ENCODE measurements at regions of chr9 and their contacts with region 1.

Region 1: GRCh38 chr9:135117281-135117680 is 29.8 kb downstream of the OLFM1 start:
- DNase-seq: no peak
- ATAC-seq: no peak

Region 2: GRCh38 chr9:135229701-135230385 is 112.6 kb after region 1 on chr9:
- intact Hi-C with region 1: loop called (anchors 10 kb)
- DNase-seq: peak; percentile 8
- ATAC-seq: no peak

Measured in left ventricle myocardium superior (tissue), 1 donor.